Activated T-helper 2 cell treated with anti-CD3 and anti-CD28 coated beads, Interferon-gamma antibody, Interleukin-2, Interleukin-4, amounts not matched to agents 10 μg/mL and 5 μg/mL and 100 μg/mL, durations not matched to agents 14 hours and 24 hours and 36 hours (primary cell): ENCODE measurements at regions of chr1 and their contacts with region 1.

Region 1: DNA sequence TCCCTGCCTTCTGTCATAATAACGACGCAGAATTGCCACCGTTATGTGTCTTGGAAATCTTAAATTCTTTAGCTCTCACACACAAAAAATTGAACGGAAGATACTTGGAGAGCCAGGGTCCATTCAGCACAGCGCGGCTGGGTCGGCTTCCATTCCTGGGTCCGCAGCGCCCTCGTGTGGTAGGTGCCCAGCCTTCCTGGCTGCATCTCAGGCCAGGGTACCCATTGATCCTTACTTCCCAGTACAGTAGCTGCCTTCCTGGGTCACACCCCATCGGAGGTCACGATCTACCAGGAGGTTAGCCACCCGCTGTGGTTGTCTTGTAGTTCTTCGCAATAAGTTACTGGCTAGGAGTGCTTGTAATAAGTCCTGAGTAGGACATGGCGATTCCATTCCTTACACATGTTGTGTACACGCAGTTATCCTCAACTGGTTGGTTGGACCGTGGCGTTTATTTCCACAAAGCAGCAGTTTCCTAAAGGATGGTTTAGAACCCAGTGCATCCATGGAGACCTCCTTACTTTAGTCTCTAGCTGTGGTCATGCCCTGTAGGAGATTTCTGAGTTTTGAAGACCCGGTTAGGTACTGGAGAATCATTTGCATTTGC is 9.9 kb upstream of the MTARC1 start:
- DNase-seq: peak; percentile 39
- H3K4me3 Mint-ChIP-seq: no peak overlapping the region
- H3K27ac Mint-ChIP-seq: no peak overlapping the region
- H3K4me1 Mint-ChIP-seq: peaks cover 2% of the 10 kb centered on the region
- H3K27me3 Mint-ChIP-seq: peaks cover 6% of the 10 kb centered on the region

Region 2: GRCh38 chr1:220189750-220190347 is 587.0 kb before region 1 on chr1:
- intact Hi-C with region 1: loop called (anchors 10 kb)
- DNase-seq: no peak
- H3K4me3 Mint-ChIP-seq: no peak overlapping the region
- H3K27ac Mint-ChIP-seq: no peak overlapping the region
- H3K4me1 Mint-ChIP-seq: no peaks in the 10 kb centered on the region
- H3K27me3 Mint-ChIP-seq: no peaks in the 10 kb centered on the region

Region 3: GRCh38 chr1:220217383-220217988 is 559.3 kb before region 1 on chr1:
- intact Hi-C with region 1: loop called (anchors 10 kb)
- DNase-seq: no peak
- H3K4me3 Mint-ChIP-seq: no peak overlapping the region
- H3K27ac Mint-ChIP-seq: no peak overlapping the region
- H3K4me1 Mint-ChIP-seq: peaks cover 8% of the 10 kb centered on the region
- H3K27me3 Mint-ChIP-seq: no peaks in the 10 kb centered on the region

Region 4: DNA sequence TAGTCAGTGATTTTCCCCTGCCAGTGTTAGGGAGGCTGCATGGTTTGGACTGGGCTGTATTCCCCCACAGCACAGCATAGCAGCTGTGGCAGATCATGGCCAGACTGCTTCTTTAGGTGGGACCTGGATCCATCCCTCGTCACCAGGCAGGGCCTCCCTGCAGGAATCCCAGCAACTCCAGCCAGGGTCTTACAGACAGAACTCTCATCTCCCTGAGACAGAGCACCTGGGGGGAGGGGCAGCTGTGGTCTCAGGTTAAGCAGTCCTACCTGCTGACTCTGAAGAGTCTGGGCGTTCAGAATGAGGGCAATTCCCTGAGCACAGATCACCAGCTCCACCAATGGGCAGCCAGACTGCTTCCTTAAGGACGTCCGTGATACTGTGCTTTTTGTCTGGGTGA is 134.5 kb before region 1 on chr1:
- intact Hi-C with region 1: no loop called
- DNase-seq: no peak
- H3K4me3 Mint-ChIP-seq: no peak overlapping the region
- H3K27ac Mint-ChIP-seq: no peak overlapping the region
- H3K4me1 Mint-ChIP-seq: no peaks in the 10 kb centered on the region
- H3K27me3 Mint-ChIP-seq: no peaks in the 10 kb centered on the region

Region 5: GRCh38 chr1:220733090-220733601 is 43.7 kb before region 1 on chr1:
- intact Hi-C with region 1: no loop called
- DNase-seq: peak; percentile 70
- H3K4me3 Mint-ChIP-seq: no peak overlapping the region
- H3K27ac Mint-ChIP-seq: no peak overlapping the region
- H3K4me1 Mint-ChIP-seq: peaks cover 2% of the 10 kb centered on the region
- H3K27me3 Mint-ChIP-seq: peaks cover 15% of the 10 kb centered on the region

Region 6: DNA sequence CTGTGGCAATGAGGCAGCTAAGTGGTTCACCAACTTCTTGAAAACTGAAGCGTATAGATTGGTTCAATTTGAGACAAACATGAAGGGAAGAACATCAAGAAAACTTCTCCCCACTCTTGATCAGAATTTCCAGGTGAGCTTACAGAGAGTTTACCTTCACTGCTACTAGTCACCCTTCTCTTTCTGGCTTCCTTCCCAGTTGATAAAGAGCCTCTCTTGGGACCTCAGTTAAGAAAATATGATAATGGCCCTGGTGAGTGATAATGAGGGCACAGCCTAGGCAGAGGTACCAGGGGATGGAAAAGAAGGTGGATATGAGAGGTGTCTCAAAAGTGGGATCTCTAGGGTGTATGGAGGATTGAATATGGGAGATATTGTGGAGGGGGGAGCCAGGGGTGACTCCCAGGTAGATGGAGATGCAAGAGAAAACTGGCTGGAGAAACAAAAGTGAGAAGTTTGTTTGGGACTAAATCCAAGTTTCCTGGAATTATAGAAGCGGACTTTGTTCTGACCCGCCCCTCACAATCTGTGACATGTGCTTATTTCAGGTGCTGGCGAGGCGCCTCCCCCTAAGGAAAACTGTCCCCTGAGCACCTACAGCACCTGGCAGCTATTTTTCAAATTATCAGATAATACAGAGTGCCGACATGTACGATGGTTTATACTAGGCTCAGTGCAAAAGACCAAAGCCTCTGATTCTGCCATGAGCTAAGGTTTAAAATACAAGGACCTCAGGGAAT is 15.0 kb before region 1 on chr1:
- intact Hi-C with region 1: no loop called
- DNase-seq: no peak
- H3K4me3 Mint-ChIP-seq: no peak overlapping the region
- H3K27ac Mint-ChIP-seq: no peak overlapping the region
- H3K4me1 Mint-ChIP-seq: no peaks in the 10 kb centered on the region
- H3K27me3 Mint-ChIP-seq: peaks cover 4% of the 10 kb centered on the region

Region 7: GRCh38 chr1:220787069-220787614 is 10.3 kb after region 1 on chr1:
- intact Hi-C with region 1: no loop called
- DNase-seq: no peak
- H3K4me3 Mint-ChIP-seq: no peak overlapping the region
- H3K27ac Mint-ChIP-seq: no peak overlapping the region
- H3K4me1 Mint-ChIP-seq: no peaks in the 10 kb centered on the region
- H3K27me3 Mint-ChIP-seq: peaks cover 53% of the 10 kb centered on the region